PC-9 (cell line): ENCODE measurements at regions of chr6 and their contacts with region 1.

Region 1: GRCh38 chr6:142474531-142475289 is 172.9 kb downstream of the ADGRG6 start:
- DNase-seq: peak; percentile 58 to 71
- H3K4me3 ChIP-seq: peak overlapping the region; percentile 38; the same call in 1 of the 2 replicates
- H3K27ac ChIP-seq: no peak overlapping the region
- H3K4me1 ChIP-seq: no peaks in the 10 kb centered on the region
- H3K27me3 ChIP-seq: no peaks in the 10 kb centered on the region
- CTCF ChIP-seq: peak; percentile 91

Region 2: DNA sequence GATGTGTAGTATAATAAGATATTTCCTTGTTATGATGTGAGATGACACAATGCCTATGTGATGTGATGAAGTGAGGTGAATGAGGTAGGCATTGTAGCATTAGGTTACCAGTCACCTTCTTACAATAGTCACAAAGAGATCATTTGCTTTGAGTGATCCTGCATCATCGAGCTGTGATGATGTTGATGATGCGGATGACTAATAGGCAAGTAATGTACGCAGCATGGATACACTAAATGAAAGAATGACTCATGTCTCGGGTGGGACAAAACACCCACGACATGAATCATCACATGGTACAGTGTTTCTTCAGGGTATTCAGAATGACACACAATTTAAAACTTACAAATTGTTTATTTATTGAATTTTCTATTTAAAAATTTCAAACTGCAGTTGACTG is 1148.3 kb before region 1 on chr6:
- CTCF ChIA-PET with region 1: no interaction called
- POLR2A ChIA-PET with region 1: no interaction called
- intact Hi-C with region 1: no loop called
- DNase-seq: peak; percentile 61 to 95
- H3K4me3 ChIP-seq: peak overlapping the region; percentile 34; the same call in 1 of the 2 replicates
- H3K27ac ChIP-seq: peak overlapping the region; percentile 83
- H3K4me1 ChIP-seq: peaks cover 7% of the 10 kb centered on the region
- H3K27me3 ChIP-seq: no peaks in the 10 kb centered on the region
- CTCF ChIP-seq: no peak

Region 3: GRCh38 chr6:142349187-142349823 is 125.4 kb before region 1 on chr6:
- CTCF ChIA-PET with region 1: no interaction called
- POLR2A ChIA-PET with region 1: no interaction called
- intact Hi-C with region 1: no loop called
- DNase-seq: no peak
- H3K4me3 ChIP-seq: no peak overlapping the region
- H3K27ac ChIP-seq: no peak overlapping the region
- H3K4me1 ChIP-seq: no peaks in the 10 kb centered on the region
- H3K27me3 ChIP-seq: no peaks in the 10 kb centered on the region
- CTCF ChIP-seq: no peak

Region 4: GRCh38 chr6:142537612-142538478 is 63.1 kb after region 1 on chr6:
- CTCF ChIA-PET with region 1: interaction called, 7 read pairs
- POLR2A ChIA-PET with region 1: no interaction called
- intact Hi-C with region 1: loop called (anchors 1 kb)
- DNase-seq: peak in 1 of 2 experiments; percentile 29
- H3K4me3 ChIP-seq: peak overlapping the region; percentile 42; the same call in 1 of the 2 replicates
- H3K27ac ChIP-seq: no peak overlapping the region
- H3K4me1 ChIP-seq: no peaks in the 10 kb centered on the region
- H3K27me3 ChIP-seq: no peaks in the 10 kb centered on the region
- CTCF ChIP-seq: peak; percentile 80

Region 5: DNA sequence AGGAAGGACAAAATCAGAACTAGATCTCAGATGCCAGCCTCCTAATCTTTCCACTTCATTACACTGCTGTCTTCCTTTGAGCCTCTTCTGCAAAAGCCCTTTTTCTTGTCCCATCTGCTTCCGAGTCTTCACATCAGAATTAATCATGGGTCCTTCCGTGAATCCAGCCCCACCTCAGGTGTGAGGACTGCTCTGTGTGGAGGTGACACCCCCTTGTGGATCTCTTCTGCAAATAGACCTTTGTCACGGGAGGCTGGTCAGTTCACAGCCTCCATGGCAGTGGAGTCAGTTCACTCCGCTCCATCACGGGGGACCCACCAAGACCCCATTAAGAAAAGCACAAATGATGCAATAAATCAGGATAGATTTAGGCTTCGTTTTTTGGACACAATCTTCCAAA is 804.7 kb after region 1 on chr6:
- CTCF ChIA-PET with region 1: no interaction called
- POLR2A ChIA-PET with region 1: no interaction called
- intact Hi-C with region 1: loop called (anchors 10 kb)
- DNase-seq: peak in 1 of 2 experiments; percentile 10
- H3K4me3 ChIP-seq: no peak overlapping the region
- H3K27ac ChIP-seq: no peak overlapping the region
- H3K4me1 ChIP-seq: no peaks in the 10 kb centered on the region
- H3K27me3 ChIP-seq: no peaks in the 10 kb centered on the region
- CTCF ChIP-seq: 0 out of 2 replicates have a peak, but pooled peaks have one; percentile 32

Region 6: DNA sequence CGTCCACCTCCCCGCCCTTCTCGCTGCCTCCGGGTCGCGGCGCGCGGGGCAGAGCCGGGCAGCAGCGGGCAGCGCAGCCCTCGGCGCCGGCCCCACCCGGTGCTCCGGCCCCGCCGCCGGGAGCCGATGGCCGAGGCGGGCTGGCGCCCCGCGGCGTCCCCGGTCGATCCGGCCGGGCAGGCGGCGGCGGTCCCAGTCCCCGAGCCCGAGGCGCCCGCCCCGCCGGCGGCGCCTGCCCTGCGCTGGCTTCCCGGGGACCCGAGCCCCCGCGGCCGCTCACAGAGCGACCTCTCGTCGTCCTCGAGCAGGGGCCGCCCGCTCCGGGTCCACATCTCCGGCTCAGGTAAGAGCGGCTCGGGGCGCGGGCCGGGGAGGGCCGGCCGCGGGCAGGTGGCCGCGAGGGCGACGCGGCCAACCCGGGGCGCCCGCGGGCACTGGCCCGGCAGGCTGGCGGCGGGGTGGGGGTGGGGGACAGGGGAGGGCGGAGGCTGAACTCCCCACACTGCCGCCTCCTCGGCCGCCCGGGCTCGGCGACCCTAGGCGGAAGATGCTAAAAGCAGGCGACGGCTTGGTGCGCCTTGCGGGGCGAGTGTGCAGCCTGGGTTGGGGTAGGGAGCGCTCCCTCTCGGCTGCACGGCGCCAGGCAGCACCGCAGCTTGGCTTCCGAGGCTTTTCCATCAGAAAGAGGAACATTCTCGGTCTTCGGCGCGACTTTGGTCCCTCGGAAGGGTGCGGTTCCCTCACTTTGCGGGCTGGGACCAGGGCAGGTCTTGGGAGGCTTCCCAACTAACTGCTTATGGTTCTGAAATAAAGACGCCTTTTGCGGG is 1062.4 kb after region 1 on chr6:
- CTCF ChIA-PET with region 1: interaction called, 3 read pairs
- POLR2A ChIA-PET with region 1: no interaction called
- intact Hi-C with region 1: loop called (anchors 10 kb)
- DNase-seq: peak in 1 of 2 experiments; percentile 62
- H3K4me3 ChIP-seq: peak overlapping the region; percentile 79
- H3K27ac ChIP-seq: no peak overlapping the region
- H3K4me1 ChIP-seq: peaks cover 4% of the 10 kb centered on the region; the same call in 1 of the 2 replicates
- H3K27me3 ChIP-seq: no peaks in the 10 kb centered on the region
- CTCF ChIP-seq: no peak; the same call in 1 of the 2 replicates